ENCODE measurements at regions of chr5 and their contacts with region 1.

Region 1: GRCh38 chr5:16791036-16791705 is 144.9 kb downstream of the MYO10 start:
- DNase-seq: peak; percentile 28 to 48 (median 36)
- ATAC-seq: peak; percentile 63
- H3K4me3 ChIP-seq: no peak overlapping the region
- H3K27ac ChIP-seq: peak overlapping the region in 1 of 4 donors; percentile 38
- H3K4me1 ChIP-seq: peaks cover 36% of the 10 kb centered on the region
- H3K27me3 ChIP-seq: no peaks in the 10 kb centered on the region
- CTCF ChIP-seq: peak; percentile 39 to 83 (median 68)
- POLR2A ChIP-seq: no peak

Region 2: DNA sequence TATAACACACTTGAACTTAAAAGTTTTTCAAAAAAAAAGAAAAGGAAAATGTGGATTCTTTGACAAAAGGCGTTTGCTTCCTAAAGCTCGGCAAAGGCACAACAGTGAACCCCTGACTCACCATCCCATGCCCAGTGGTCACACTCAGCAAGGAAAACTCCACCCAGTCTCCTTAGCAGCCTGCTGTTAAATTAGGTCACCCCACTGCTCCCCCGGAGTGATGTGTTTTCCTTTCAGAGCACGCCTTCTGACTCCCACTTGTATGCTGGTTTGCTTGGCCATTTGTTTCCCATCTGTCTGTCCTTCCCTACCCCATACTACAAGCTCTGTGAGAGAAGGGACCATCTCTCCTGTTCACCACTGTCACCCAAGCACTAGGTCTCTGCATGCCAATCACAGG is 198.2 kb before region 1 on chr5:
- intact Hi-C with region 1: no loop called
- DNase-seq: no peak
- ATAC-seq: no peak
- H3K4me3 ChIP-seq: no peak overlapping the region
- H3K27ac ChIP-seq: no peak overlapping the region
- H3K4me1 ChIP-seq: peaks cover 12% of the 10 kb centered on the region
- H3K27me3 ChIP-seq: no peaks in the 10 kb centered on the region
- CTCF ChIP-seq: no peak
- POLR2A ChIP-seq: no peak

Region 3: DNA sequence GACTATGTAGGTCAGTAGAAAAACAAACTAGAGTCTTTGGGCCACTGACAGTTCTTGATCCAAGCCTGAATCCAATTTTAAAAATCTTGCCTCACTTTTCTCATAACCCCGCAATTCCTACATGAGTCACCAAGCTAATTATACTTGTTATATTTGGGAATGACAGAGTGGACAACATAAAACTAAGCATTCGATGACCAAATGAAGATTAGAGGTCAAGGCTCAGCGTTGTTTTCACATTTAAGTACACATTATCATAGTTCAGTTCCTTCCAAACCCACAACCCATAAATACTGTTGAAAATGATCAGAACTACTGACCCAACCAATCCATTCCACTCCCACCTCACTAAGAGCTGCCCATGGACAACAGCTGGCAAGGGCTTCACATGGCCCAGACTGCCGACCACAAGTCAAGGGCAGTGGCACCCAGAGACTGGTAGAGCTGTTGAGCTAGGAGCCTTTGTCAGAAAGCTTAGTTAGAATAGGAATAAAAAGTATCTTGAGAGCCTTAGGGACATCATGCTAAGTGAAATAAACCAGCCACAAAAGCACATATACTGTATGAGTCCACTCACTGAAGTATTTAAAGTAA is 80.7 kb after region 1 on chr5:
- intact Hi-C with region 1: no loop called
- DNase-seq: no peak
- ATAC-seq: peak; percentile 34
- H3K4me3 ChIP-seq: no peak overlapping the region
- H3K27ac ChIP-seq: peak overlapping the region; percentile 9 to 38 (median 24)
- H3K4me1 ChIP-seq: peaks cover 14% of the 10 kb centered on the region
- H3K27me3 ChIP-seq: no peaks in the 10 kb centered on the region
- CTCF ChIP-seq: no peak
- POLR2A ChIP-seq: no peak

Region 4: DNA sequence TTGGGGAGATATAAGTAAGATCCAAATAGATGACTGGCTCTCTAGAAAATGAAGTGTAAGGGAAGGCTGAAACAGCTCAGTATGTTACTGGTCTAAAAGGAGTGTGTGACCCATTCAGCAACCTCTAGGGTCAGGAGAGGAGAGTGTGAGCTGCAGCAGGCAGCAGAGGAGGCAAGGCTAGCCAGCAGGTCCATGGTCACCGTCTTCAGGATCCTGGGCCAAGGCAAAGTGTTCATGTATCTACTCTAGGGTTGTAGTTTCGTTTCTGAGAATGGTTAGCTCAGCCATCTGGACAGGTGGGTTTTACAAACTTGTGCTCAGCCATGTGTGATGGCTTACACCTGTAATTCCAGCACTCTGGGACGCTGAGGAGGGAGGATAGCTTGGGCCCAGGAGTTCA is 131.3 kb after region 1 on chr5:
- intact Hi-C with region 1: loop called (anchors 10 kb)
- DNase-seq: no peak
- ATAC-seq: peak; percentile 12
- H3K4me3 ChIP-seq: no peak overlapping the region
- H3K27ac ChIP-seq: peak overlapping the region in 3 of 4 donors; percentile 2 to 46 (median 25)
- H3K4me1 ChIP-seq: peaks cover 68% of the 10 kb centered on the region
- H3K27me3 ChIP-seq: no peaks in the 10 kb centered on the region
- CTCF ChIP-seq: no peak
- POLR2A ChIP-seq: no peak

Region 5: DNA sequence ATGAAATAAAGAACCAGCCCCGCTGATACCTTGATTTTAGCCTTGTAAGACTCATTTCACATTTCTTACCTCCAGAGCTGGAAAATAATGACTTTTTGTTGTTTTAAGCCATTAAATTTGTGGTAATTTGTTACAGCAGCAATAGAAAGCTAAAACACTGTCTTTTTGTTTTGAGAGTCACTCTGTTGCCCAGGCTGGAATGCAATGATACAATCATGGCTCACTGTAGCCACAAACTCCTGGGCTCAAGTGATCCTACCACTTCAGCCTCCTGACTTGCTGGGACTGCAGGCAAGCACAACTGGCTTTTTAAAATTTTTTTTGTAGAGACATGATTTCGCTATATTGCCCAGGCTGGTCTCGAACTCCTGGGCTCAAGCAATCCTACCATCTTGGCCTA is 179.7 kb after region 1 on chr5:
- intact Hi-C with region 1: no loop called
- DNase-seq: no peak
- ATAC-seq: no peak
- H3K4me3 ChIP-seq: no peak overlapping the region
- H3K27ac ChIP-seq: no peak overlapping the region
- H3K4me1 ChIP-seq: no peaks in the 10 kb centered on the region
- H3K27me3 ChIP-seq: no peaks in the 10 kb centered on the region
- CTCF ChIP-seq: no peak
- POLR2A ChIP-seq: no peak

Region 6: GRCh38 chr5:17132444-17133083 is 341.4 kb after region 1 on chr5:
- intact Hi-C with region 1: loop called (anchors 5 kb)
- DNase-seq: no peak
- ATAC-seq: no peak
- H3K4me3 ChIP-seq: no peak overlapping the region
- H3K27ac ChIP-seq: no peak overlapping the region
- H3K4me1 ChIP-seq: no peaks in the 10 kb centered on the region
- H3K27me3 ChIP-seq: no peaks in the 10 kb centered on the region
- CTCF ChIP-seq: peak in 6 of 7 experiments; percentile 56 to 68 (median 65)
- POLR2A ChIP-seq: no peak

Region 7: GRCh38 chr5:17189381-17190036 is 398.3 kb after region 1 on chr5:
- intact Hi-C with region 1: loop called (anchors 5 kb)
- DNase-seq: peak; percentile 66 to 84 (median 74)
- ATAC-seq: peak; percentile 61
- H3K4me3 ChIP-seq: no peak overlapping the region
- H3K27ac ChIP-seq: no peak overlapping the region
- H3K4me1 ChIP-seq: peaks cover 15% of the 10 kb centered on the region
- H3K27me3 ChIP-seq: no peaks in the 10 kb centered on the region
- CTCF ChIP-seq: peak; percentile 62 to 88 (median 78)
- POLR2A ChIP-seq: no peak